Pancreas (tissue), 10 donors: ENCODE measurements at regions of chr11 and their contacts with region 1.

Region 1: GRCh38 chr11:129331871-129332274 is 43.8 kb upstream of the BARX2 start:
- DNase-seq: peak; percentile 84 to 93 (median 88)
- ATAC-seq: peak; percentile 95 to 99 (median 98)
- H3K4me3 ChIP-seq: no peak overlapping the region
- H3K27ac ChIP-seq: no peak overlapping the region
- H3K4me1 ChIP-seq: peaks cover 0 to 2% (median 0%) of the 10 kb centered on the region in 3 donors
- H3K27me3 ChIP-seq: no peaks in the 10 kb centered on the region
- CTCF ChIP-seq: peak; percentile 59 to 80 (median 70)

Region 2: DNA sequence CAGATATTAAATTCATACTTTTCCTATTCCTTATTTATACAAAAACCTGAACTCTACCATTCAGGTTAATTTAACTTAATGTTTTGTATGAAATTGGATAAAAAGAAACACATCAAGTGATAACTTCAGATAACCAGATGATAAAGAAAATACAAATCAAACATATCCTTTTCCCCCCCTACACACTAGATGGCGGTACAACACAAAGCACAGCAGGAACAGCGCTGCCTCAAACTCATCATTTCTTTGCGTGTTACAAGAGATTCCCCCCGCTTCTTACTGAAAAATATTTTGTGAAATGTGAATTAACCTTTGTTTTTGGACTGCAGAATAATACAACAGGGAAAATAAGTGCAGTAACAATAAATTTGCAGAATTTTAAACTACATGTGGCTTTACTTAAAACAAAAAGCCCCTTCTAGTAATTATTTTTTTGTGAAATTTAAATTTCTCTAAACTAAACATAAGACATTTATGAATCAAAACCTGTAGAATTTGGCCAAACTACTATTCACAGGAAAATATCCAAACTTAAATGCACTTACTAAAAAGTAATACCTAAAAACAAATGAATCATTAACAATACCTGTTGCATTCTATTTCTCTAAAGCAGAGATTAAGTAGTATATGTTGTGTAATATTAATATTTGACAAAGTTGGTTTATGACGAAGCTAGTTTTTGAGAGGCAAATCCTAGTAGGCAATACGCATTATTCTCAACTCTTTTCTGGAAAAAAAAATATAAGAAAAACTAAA is 214.1 kb before region 1 on chr11:
- intact Hi-C with region 1: loop called in 1 of 3 experiments (anchors 5 kb)
- DNase-seq: peak in 3 of 6 donors; percentile 9 to 39 (median 35)
- ATAC-seq: peak; percentile 63 to 90 (median 88)
- H3K4me3 ChIP-seq: no peak overlapping the region
- H3K27ac ChIP-seq: no peak overlapping the region
- H3K4me1 ChIP-seq: peaks cover 0 to 4% (median 3%) of the 10 kb centered on the region in 3 donors
- H3K27me3 ChIP-seq: no peaks in the 10 kb centered on the region
- CTCF ChIP-seq: peak; percentile 8 to 66 (median 62)

Region 3: GRCh38 chr11:129155745-129156144 is 176.1 kb before region 1 on chr11:
- intact Hi-C with region 1: no loop called
- DNase-seq: no peak
- ATAC-seq: no peak
- H3K4me3 ChIP-seq: no peak overlapping the region
- H3K27ac ChIP-seq: no peak overlapping the region
- H3K4me1 ChIP-seq: no peaks in the 10 kb centered on the region
- H3K27me3 ChIP-seq: no peaks in the 10 kb centered on the region
- CTCF ChIP-seq: no peak